ENCODE measurements at regions of chr5 and their contacts with region 1.

Region 1: GRCh38 chr5:35926389-35927051 is 11.9 kb downstream of the CAPSL start:
- DNase-seq: peak; percentile 29 to 80 (median 73)
- ATAC-seq: peak; percentile 70
- H3K4me3 ChIP-seq: no peak overlapping the region
- H3K4me3 Mint-ChIP-seq: peak overlapping the region; percentile 35 to 87 (median 58)
- H3K27ac ChIP-seq: no peak overlapping the region
- H3K27ac Mint-ChIP-seq: peak overlapping the region in 3 of 9 donors; percentile 1 to 60 (median 7)
- H3K4me1 ChIP-seq: peaks cover 10 to 14% of the 10 kb centered on the region in 2 donors
- H3K4me1 Mint-ChIP-seq: peaks cover 18 to 49% (median 35%) of the 10 kb centered on the region in 7 donors
- H3K27me3 ChIP-seq: no peaks in the 10 kb centered on the region
- H3K27me3 Mint-ChIP-seq: peaks cover 0 to 13% (median 5%) of the 10 kb centered on the region in 5 donors

Region 2: DNA sequence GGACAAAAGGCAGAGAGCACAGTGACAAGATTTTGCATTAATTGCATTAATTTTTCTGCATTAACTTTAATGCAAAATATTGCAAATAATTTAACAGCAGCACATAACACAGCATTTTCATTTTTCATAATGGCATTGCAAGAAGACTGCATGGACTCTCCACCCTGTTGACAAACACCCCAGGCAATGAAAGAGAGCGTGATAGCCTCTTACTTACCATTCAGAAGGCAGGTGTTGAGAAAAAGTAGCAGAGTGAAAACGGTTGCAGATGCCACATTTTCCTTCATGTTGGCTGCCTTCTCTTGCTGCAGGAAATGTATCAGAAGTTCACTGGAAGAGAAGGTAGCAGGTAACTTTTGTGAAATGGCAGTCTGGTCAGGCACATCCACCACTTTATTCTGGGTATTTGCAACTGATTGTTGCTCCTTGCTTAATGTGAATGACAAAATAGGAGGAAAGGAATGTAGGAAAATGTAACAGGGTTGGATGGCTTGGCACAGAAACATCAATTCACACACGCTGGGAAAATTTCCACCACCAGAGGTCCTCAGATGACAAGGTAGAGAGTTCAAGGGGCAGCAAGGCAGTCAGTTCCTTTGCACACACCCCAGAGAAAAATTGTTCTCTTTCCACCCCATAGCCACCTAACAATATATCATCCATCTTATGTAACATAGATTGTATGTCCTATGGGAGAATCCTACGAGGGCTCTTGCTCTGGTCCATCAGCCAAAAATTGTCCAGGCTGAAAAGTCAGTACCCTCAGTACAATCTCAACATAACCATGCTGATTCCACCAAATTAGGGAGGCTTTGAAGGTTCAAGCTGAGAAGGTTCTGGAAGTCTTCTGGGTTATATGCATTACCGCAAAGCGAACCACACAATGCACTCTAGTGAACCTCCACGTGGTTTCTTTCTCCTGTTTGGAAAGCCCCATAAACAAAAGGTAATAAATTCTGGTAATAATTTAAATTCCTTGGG is 836.9 kb before region 1 on chr5:
- CTCF ChIA-PET with region 1: interaction called, 40 read pairs
- POLR2A ChIA-PET with region 1: no interaction called
- intact Hi-C with region 1: no loop called
- DNase-seq: peak; percentile 15 to 55 (median 37)
- ATAC-seq: peak; percentile 56
- H3K4me3 ChIP-seq: no peak overlapping the region
- H3K4me3 Mint-ChIP-seq: no peak overlapping the region
- H3K27ac ChIP-seq: no peak overlapping the region
- H3K27ac Mint-ChIP-seq: no peak overlapping the region
- H3K4me1 ChIP-seq: no peaks in the 10 kb centered on the region
- H3K4me1 Mint-ChIP-seq: peaks cover 0 to 3% (median 0%) of the 10 kb centered on the region in 7 donors
- H3K27me3 ChIP-seq: no peaks in the 10 kb centered on the region
- H3K27me3 Mint-ChIP-seq: peaks cover 0 to 7% (median 6%) of the 10 kb centered on the region in 5 donors

Region 3: GRCh38 chr5:35436410-35437057 is 490.0 kb before region 1 on chr5:
- CTCF ChIA-PET with region 1: no interaction called
- POLR2A ChIA-PET with region 1: no interaction called
- intact Hi-C with region 1: loop called in 1 of 2 experiments (anchors 5 kb)
- DNase-seq: no peak
- ATAC-seq: no peak
- H3K4me3 ChIP-seq: no peak overlapping the region
- H3K4me3 Mint-ChIP-seq: no peak overlapping the region
- H3K27ac ChIP-seq: no peak overlapping the region
- H3K27ac Mint-ChIP-seq: no peak overlapping the region
- H3K4me1 ChIP-seq: no peaks in the 10 kb centered on the region
- H3K4me1 Mint-ChIP-seq: peaks cover 0 to 4% (median 0%) of the 10 kb centered on the region in 7 donors
- H3K27me3 ChIP-seq: peaks cover 5 to 6% of the 10 kb centered on the region in 2 donors
- H3K27me3 Mint-ChIP-seq: peaks cover 38 to 57% (median 47%) of the 10 kb centered on the region in 5 donors

Region 4: DNA sequence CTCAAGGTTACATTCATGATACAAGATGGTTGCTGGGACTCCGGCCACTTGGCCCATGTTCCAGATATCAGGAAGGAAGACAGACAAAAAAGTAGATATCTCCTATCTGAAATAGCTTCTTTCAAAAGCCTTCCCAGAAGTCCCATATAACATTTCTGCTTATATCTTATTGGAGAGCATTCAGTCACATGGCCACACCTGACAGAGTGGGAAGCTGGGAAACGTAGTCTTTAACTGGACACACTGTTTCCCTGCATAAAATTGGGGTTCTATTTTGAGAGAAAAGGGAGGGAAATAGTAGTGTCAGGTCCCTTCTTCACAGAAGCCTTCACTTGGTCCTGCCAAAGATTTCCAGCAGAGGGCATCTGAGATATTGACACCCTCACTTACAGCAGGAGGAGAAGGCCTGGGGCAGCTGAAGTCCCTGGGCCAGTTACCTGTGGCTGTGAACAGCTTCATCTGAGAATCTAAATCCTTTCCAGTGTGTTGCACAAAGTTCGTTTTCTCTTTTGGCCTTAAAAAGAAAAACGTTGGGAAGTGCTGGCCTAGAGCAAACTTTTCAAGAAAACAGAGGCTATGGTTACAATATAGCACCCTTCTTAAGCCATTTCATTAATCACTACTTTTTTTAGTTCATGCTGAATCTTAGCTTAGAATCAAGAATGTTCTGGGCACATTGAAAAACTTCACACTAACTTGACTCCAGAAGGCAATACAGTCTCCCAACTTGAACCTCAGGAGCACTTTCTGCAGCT is 275.3 kb before region 1 on chr5:
- CTCF ChIA-PET with region 1: interaction called, 137 read pairs
- POLR2A ChIA-PET with region 1: interaction called, 9 read pairs
- intact Hi-C with region 1: loop called (anchors 1 kb)
- DNase-seq: peak; percentile 10 to 71 (median 64)
- ATAC-seq: peak; percentile 82
- H3K4me3 ChIP-seq: no peak overlapping the region
- H3K4me3 Mint-ChIP-seq: no peak overlapping the region
- H3K27ac ChIP-seq: no peak overlapping the region
- H3K27ac Mint-ChIP-seq: peak overlapping the region in 5 of 9 donors; percentile 2 to 74 (median 42)
- H3K4me1 ChIP-seq: peaks cover 0 to 6% of the 10 kb centered on the region in 2 donors
- H3K4me1 Mint-ChIP-seq: peaks cover 0 to 16% (median 11%) of the 10 kb centered on the region in 7 donors
- H3K27me3 ChIP-seq: no peaks in the 10 kb centered on the region
- H3K27me3 Mint-ChIP-seq: no peaks in the 10 kb centered on the region

Region 5: GRCh38 chr5:35777358-35778087 is 149.0 kb before region 1 on chr5:
- CTCF ChIA-PET with region 1: interaction called, 35 read pairs
- POLR2A ChIA-PET with region 1: interaction called, 16 read pairs
- intact Hi-C with region 1: loop called (anchors 1 kb)
- DNase-seq: peak; percentile 35 to 76 (median 67)
- ATAC-seq: peak; percentile 83
- H3K4me3 ChIP-seq: peak overlapping the region; percentile 14
- H3K4me3 Mint-ChIP-seq: peak overlapping the region; percentile 6 to 85 (median 74)
- H3K27ac ChIP-seq: peak overlapping the region; percentile 52
- H3K27ac Mint-ChIP-seq: peak overlapping the region; percentile 76 to 99 (median 92)
- H3K4me1 ChIP-seq: peaks cover 39 to 50% of the 10 kb centered on the region in 2 donors
- H3K4me1 Mint-ChIP-seq: peaks cover 19 to 87% (median 62%) of the 10 kb centered on the region in 7 donors
- H3K27me3 ChIP-seq: no peaks in the 10 kb centered on the region
- H3K27me3 Mint-ChIP-seq: no peaks in the 10 kb centered on the region

Region 6: DNA sequence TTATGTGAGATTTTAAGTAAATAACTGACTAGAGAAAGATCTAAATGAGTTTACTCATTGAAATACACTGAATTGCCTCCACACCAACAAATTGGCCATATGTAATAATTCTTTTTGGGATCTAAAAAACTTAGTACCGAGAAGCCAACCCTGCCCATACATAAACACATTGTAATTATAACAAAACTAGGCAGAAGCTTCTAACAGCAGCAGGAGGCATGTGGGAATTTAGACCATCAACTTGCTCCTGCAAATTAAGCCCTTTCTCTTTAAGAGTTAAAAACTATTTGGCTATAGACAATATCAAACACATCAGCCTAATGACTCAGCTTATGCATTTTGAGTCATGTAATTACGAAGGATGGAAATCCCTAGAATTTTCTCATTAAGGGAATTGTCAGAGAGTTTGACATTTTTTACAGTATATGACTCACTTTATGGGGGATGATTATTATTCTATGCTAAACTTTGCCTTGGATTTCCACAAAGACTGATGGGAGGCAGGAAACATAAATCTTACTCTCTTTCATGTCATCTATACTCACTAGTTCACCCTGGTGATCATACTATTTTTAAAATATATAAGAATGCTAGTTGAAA is 68.8 kb before region 1 on chr5:
- CTCF ChIA-PET with region 1: interaction called, 12 read pairs
- POLR2A ChIA-PET with region 1: interaction called, 13 read pairs
- intact Hi-C with region 1: loop called (anchors 1 to 2 kb)
- DNase-seq: peak in 1 of 9 donors; percentile 41
- ATAC-seq: no peak
- H3K4me3 ChIP-seq: peak overlapping the region; percentile 80
- H3K4me3 Mint-ChIP-seq: peak overlapping the region; percentile 82 to 100 (median 94)
- H3K27ac ChIP-seq: peak overlapping the region; percentile 98
- H3K27ac Mint-ChIP-seq: peak overlapping the region; percentile 96 to 100 (median 99)
- H3K4me1 ChIP-seq: peaks cover 40 to 50% of the 10 kb centered on the region in 2 donors
- H3K4me1 Mint-ChIP-seq: peaks cover 25 to 73% (median 63%) of the 10 kb centered on the region in 7 donors
- H3K27me3 ChIP-seq: no peaks in the 10 kb centered on the region
- H3K27me3 Mint-ChIP-seq: no peaks in the 10 kb centered on the region

Region 7: DNA sequence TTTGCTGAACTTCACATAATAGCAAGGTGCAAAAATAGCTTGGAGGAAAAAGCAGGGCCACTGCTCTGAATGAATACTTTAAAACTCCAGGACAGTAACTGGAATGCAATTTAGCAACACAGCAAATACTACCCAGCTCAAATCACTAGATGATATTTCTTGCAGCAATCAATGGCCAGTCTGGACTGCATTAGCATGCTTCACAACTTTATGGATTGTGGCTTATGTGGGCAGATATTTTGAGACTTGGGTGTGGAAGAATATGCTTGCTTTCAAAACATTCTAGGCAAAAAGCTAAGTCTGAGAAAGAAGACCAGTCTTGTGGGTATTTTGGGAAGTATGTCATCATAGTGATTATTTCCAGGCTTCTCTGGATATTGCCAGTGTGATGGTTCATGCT is 372.0 kb after region 1 on chr5:
- CTCF ChIA-PET with region 1: no interaction called
- POLR2A ChIA-PET with region 1: no interaction called
- intact Hi-C with region 1: no loop called
- DNase-seq: no peak
- ATAC-seq: no peak
- H3K4me3 ChIP-seq: no peak overlapping the region
- H3K4me3 Mint-ChIP-seq: no peak overlapping the region
- H3K27ac ChIP-seq: no peak overlapping the region
- H3K27ac Mint-ChIP-seq: no peak overlapping the region
- H3K4me1 ChIP-seq: no peaks in the 10 kb centered on the region
- H3K4me1 Mint-ChIP-seq: peaks cover 0 to 12% (median 6%) of the 10 kb centered on the region in 7 donors
- H3K27me3 ChIP-seq: peaks cover 0 to 3% of the 10 kb centered on the region in 2 donors
- H3K27me3 Mint-ChIP-seq: peaks cover 0 to 39% (median 31%) of the 10 kb centered on the region in 5 donors

Measured in naive thymus-derived CD4-positive, alpha-beta T cell (primary cell).